ENCODE measurements at regions of chr3 and their contacts with region 1.

Region 1: GRCh38 chr3:58008140-58009025 is at the start of gene FLNB:
- DNase-seq: peak; percentile 61 to 76
- ATAC-seq: peak; percentile 68 to 85 (median 74)
- H3K4me3 ChIP-seq: peak within 1 kb of the TSS; percentile 81
- H3K27ac ChIP-seq: peak within 1 kb of the TSS; percentile 38
- H3K4me1 ChIP-seq: peaks cover 5% of the 10 kb centered on the region
- H3K27me3 ChIP-seq: peaks cover 0 to 15% (median 4%) of the 10 kb centered on the region in 3 donors
- CTCF ChIP-seq: peak; percentile 47
- total RNA-seq, gene FLNB: 11.6 to 17.9 (median 15.4) TPM

Region 2: DNA sequence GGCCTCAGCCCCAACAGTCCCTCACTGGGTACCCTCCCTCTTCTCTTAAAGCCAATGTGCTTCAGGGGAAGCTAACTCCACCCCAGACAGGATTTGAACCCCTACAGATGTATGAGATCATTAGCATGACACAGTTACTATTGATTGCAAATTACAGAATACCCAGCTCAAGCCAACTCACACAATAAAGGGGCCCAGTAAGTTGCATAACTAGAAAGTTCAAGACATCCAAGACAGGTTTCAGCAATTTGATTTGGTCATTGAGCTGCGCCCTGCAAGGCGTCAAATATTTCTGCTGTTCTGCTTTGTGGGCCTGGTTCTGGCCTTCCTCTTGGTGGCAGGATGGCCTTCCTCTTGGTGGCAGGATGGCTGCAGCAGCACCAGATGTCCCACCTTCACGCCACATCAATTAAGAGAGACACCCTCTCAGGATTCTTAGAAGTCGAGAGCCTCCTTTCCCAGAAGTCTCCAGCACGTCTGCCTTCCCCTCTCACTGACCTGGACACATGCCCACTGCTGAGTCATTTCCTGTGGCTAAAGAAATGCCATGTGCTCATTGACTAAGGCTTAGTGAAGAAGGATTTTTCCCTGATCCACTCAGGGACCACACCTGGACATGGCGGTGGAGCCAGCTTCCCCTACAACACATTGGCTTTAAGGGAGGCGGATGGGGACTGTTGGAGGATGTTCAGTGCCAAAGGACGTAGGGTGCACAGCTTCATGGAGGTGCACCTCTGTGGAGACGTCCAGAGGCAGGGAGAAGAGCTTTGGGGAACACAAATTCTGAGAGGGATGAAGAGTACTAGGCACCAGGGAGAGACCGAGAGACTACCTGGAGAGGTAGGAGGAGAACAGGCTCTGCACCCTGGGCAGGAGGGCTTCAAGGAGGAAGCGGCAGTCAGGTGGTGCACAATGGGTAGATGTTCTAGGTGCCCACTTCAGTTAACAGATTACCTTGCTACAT is 153.3 kb after region 1 on chr3:
- intact Hi-C with region 1: loop called in 1 of 2 experiments (anchors 5 kb)
- DNase-seq: peak in 1 of 2 donors; percentile 70
- ATAC-seq: peak; percentile 25 to 58 (median 42)
- H3K4me3 ChIP-seq: no peak overlapping the region
- H3K27ac ChIP-seq: no peak overlapping the region
- H3K4me1 ChIP-seq: no peaks in the 10 kb centered on the region
- H3K27me3 ChIP-seq: no peaks in the 10 kb centered on the region
- CTCF ChIP-seq: no peak

Measured in psoas muscle (tissue), 8 donors.